PC-9 (cell line): ENCODE measurements at regions of chr21 and their contacts with region 1.

Region 1: DNA sequence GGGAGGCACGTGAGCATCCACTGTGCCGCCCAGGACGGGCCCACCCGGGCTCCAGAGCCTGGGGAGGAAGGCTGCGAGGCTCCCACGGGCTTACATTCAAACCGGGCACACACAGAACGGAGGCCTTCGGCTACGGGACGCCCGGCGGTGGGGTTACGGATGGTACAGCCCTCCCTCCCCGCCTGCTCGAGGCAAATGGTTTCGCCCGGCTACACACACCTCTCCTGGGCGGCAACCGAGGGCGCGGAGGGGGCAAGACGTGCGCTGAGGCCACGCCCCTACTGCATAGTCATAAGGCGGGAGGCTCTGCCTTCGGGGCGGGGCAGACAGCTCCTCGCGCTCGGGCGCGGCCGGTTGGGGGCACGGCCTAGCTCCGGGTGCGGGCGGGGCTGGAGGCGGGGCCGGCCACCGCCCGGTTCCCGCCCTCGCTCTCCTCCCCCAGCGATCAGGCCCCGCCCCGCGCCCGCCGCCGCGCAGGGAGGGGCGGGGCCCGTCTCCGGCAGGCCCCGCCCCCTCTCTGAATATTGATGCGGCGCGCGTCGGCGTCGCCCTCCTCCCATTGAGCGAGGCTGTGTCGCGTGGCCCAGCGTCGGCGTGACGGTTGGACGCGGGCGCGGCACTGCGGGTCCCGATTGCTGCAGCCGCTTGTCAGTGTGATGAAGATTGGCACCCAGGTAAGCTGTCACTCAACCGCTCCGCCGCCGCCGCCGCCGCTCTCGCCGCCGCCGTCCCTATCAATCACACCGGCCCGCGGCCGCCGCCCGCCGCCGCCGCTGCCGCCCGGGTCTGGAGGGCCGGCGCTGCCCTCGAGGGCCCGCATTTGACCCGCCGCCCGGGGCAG is at the start of gene PKNOX1:
- DNase-seq: peak; percentile 87 to 97
- H3K4me3 ChIP-seq: peak within 1 kb of the TSS; percentile 81
- H3K27ac ChIP-seq: peak within 1 kb of the TSS; percentile 67
- H3K4me1 ChIP-seq: peaks cover 18% of the 10 kb centered on the region
- H3K27me3 ChIP-seq: no peaks in the 10 kb centered on the region
- CTCF ChIP-seq: no peak
- total RNA-seq, gene PKNOX1: 8.9 and 17.1 TPM in 2 replicates

Region 2: GRCh38 chr21:42956819-42957632 is 17.2 kb before region 1 on chr21:
- CTCF ChIA-PET with region 1: interaction called, 4 read pairs
- POLR2A ChIA-PET with region 1: interaction called, 3 read pairs
- intact Hi-C with region 1: loop called (anchors 1 kb)
- DNase-seq: no peak
- H3K4me3 ChIP-seq: no peak overlapping the region
- H3K27ac ChIP-seq: no peak overlapping the region
- H3K4me1 ChIP-seq: peaks cover 25% of the 10 kb centered on the region
- H3K27me3 ChIP-seq: no peaks in the 10 kb centered on the region
- CTCF ChIP-seq: no peak

Region 3: DNA sequence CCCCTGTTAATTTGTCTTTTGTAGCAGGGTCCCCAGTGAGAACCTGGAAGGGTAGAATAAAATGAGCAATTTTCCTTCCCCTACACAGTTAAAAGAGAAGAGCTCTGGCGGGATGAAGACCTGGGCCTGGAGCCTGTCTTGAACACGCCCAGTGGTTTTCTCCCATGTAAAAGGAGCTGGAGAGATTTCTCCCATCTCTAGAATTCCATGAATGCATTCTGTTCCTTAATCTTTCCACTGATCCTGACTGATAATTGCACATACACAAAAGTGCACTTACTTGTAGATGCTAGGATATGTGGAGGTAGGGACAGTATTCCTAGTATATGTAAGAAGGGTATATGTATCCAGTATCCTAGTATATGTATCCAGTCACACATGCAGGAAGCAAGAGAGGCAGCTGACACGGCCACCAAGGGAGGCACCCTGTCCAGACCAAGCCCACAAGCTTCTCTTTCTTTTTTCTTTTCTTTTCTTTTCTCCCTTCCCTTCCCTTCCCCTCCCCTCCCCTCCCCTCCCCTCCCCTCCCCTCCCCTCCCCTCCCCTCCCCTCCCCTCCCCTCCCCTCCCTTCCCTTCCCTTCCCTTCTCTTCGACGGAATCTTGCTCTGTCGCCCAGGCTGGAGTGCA is 11.7 kb before region 1 on chr21:
- CTCF ChIA-PET with region 1: no interaction called
- POLR2A ChIA-PET with region 1: interaction called, 13 read pairs
- intact Hi-C with region 1: no loop called
- DNase-seq: no peak
- H3K4me3 ChIP-seq: no peak overlapping the region
- H3K27ac ChIP-seq: no peak overlapping the region
- H3K4me1 ChIP-seq: no peaks in the 10 kb centered on the region
- H3K27me3 ChIP-seq: no peaks in the 10 kb centered on the region
- CTCF ChIP-seq: no peak